ENCODE measurements at regions of chr14 and their contacts with region 1.

Region 1: DNA sequence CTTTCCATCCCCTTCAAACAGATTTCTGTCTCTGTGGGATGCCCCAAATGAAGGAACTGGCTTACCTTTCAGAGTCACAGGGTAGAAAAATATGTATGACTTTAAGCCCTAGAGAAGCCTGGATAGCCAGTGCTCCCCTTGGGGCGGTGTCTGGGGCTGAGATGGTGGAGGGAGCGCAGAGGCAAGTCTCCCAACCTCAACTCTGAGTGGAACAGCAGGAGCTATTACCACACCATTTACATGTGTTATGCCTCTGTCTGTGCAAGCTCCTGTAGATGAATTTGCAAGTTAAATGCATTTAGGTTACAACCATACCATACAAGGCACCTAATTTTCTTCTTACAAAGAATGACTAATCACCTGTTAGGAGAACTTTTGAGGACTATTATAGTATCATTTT is 50.4 kb upstream of the CLMN start:
- DNase-seq: no peak
- H3K4me3 ChIP-seq: no peak overlapping the region
- H3K27ac ChIP-seq: no peak overlapping the region
- H3K4me1 ChIP-seq: no peaks in the 10 kb centered on the region
- H3K27me3 ChIP-seq: no peaks in the 10 kb centered on the region
- CTCF ChIP-seq: no peak
- EP300 ChIP-seq: no peak
- POLR2A ChIP-seq: no peak

Region 2: GRCh38 chr14:95265106-95266094 is 104.7 kb before region 1 on chr14:
- in situ Hi-C with region 1: no loop called
- intact Hi-C with region 1: no loop called
- DNase-seq: peak; percentile 66
- H3K4me3 ChIP-seq: no peak overlapping the region
- H3K27ac ChIP-seq: peak overlapping the region; percentile 85 to 88 (median 86)
- H3K4me1 ChIP-seq: peaks cover 14 to 33% (median 18%) of the 10 kb centered on the region in 4 donors
- H3K27me3 ChIP-seq: no peaks in the 10 kb centered on the region
- CTCF ChIP-seq: no peak
- EP300 ChIP-seq: peak; percentile 64
- POLR2A ChIP-seq: peak; percentile 57

Region 3: GRCh38 chr14:95472819-95473251 is 102.8 kb after region 1 on chr14:
- in situ Hi-C with region 1: no loop called
- intact Hi-C with region 1: no loop called
- DNase-seq: no peak
- H3K4me3 ChIP-seq: no peak overlapping the region
- H3K27ac ChIP-seq: no peak overlapping the region
- H3K4me1 ChIP-seq: peaks cover 10 to 27% (median 17%) of the 10 kb centered on the region in 4 donors
- H3K27me3 ChIP-seq: no peaks in the 10 kb centered on the region
- CTCF ChIP-seq: no peak
- EP300 ChIP-seq: no peak
- POLR2A ChIP-seq: no peak

Region 4: DNA sequence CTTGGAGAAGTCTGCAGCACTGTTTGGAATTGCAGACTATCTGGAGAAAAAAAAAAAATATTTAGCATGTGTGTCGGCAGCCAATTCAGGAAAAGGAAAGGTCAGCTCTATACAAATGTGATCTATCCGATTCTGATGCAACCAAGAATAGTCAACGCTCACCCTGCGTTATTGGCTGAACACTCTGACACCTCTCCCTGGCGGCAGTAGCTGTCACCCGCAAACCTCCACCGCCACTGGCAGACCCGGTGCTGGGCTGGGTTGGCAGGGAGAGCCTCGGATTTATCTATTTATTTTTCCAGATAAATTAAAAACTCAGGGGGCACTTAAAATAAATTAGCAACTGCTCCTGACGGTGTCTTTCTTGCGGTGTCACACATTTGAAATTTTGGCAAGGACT is 1836.8 kb after region 1 on chr14:
- in situ Hi-C with region 1: no loop called
- intact Hi-C with region 1: loop called (anchors 10 kb)
- DNase-seq: no peak
- H3K4me3 ChIP-seq: no peak overlapping the region
- H3K27ac ChIP-seq: no peak overlapping the region
- H3K4me1 ChIP-seq: no peaks in the 10 kb centered on the region
- H3K27me3 ChIP-seq: no peaks in the 10 kb centered on the region
- CTCF ChIP-seq: no peak
- EP300 ChIP-seq: no peak
- POLR2A ChIP-seq: no peak

Measured in transverse colon (tissue), 4 donors.